Spleen (tissue), 13 donors: ENCODE measurements at regions of chr7 and their contacts with region 1.

Region 1: DNA sequence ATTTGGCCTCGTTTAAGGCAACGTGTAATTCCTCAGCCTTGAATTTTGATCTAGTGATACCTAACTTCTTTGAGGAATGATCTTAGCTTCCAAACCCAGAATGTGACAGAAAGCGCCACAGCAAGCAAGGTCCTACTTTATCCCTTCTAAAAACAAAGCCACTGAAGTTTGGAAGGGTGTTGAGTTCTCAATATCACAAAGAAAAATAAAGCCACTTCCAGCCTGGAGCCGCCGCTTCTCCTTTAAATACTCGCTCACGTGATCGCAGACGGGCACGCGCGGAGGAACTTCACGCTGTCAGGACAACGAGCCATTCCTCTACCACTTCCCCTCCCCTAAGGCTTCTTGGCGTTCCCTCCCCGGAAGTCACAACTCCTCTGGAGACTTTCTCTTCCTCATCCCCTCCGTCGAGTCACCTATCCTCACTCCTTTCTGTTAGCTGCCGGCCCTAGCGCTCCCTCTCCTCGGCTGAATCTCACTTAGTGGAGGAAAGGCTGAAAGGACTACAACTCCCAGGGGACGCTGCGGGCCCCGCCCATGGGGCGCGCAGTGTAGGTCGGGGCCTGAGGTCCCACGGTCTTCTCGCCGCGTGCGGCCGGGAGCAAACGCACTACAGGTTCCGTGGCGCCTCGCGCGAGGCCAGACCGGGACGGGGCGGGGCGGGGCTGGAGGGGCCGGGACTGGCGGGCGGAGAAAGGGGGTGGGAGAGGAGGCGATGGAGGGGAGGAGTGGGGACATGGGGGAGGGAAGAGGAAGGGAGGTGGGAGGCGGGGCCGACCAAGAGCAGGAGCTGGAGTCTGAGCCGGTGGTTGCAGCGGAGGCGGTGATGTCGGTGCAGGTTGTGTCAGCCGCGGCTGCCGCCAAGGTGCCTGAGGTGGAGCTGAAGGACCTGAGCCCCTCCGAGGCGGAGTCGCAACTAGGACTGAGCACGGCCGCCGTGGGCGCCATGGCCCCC is at the start of gene AHCYL2:
- DNase-seq: peak; percentile 100
- H3K4me3 ChIP-seq: peak within 1 kb of the TSS; percentile 73 to 100 (median 96)
- H3K27ac ChIP-seq: peak within 1 kb of the TSS; percentile 89 to 97 (median 95)
- H3K4me1 ChIP-seq: peaks cover 4 to 57% (median 31%) of the 10 kb centered on the region in 6 donors
- H3K27me3 ChIP-seq: no peaks in the 10 kb centered on the region
- CTCF ChIP-seq: peak in 1 of 11 experiments; percentile 36
- POLR2A ChIP-seq: peak in 1 of 3 donors; percentile 27
- total RNA-seq, gene AHCYL2: 14.1 to 20.1 (median 18.3) TPM

Region 2: GRCh38 chr7:129271500-129272355 is 47.2 kb after region 1 on chr7:
- intact Hi-C with region 1: loop called (anchors 10 kb)
- DNase-seq: no peak
- H3K4me3 ChIP-seq: peak overlapping the region in 1 of 8 donors; percentile 3
- H3K27ac ChIP-seq: no peak overlapping the region
- H3K4me1 ChIP-seq: peaks cover 0 to 21% (median 14%) of the 10 kb centered on the region in 6 donors
- H3K27me3 ChIP-seq: no peaks in the 10 kb centered on the region
- CTCF ChIP-seq: peak; percentile 54 to 81 (median 72)
- POLR2A ChIP-seq: no peak

Region 3: DNA sequence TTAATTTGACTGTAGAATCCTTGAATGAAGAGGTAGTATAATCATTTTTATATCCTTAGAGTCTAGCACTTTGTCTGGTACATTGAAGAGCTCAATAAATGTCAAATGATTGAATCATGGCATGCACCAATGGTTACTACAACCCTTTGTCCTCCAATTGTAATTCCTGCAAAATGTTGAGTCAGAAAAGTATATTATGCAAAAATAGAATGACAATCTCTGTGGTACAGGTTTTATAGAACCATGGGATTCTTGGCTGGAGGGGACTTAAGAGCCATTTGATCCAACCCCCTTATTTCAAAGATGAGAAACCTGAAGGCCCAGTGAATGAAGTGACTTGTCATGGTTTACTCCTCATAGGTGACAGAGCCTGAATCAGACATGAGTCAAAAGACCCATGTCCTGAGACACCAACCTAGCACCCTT is 246.9 kb after region 1 on chr7:
- intact Hi-C with region 1: loop called (anchors 10 kb)
- DNase-seq: no peak
- H3K4me3 ChIP-seq: no peak overlapping the region
- H3K27ac ChIP-seq: no peak overlapping the region
- H3K4me1 ChIP-seq: peaks cover 0 to 7% (median 1%) of the 10 kb centered on the region in 6 donors
- H3K27me3 ChIP-seq: no peaks in the 10 kb centered on the region
- CTCF ChIP-seq: no peak
- POLR2A ChIP-seq: no peak